SK-N-SH (cell line): ENCODE measurements at regions of chr10 and their contacts with region 1.

Region 1: DNA sequence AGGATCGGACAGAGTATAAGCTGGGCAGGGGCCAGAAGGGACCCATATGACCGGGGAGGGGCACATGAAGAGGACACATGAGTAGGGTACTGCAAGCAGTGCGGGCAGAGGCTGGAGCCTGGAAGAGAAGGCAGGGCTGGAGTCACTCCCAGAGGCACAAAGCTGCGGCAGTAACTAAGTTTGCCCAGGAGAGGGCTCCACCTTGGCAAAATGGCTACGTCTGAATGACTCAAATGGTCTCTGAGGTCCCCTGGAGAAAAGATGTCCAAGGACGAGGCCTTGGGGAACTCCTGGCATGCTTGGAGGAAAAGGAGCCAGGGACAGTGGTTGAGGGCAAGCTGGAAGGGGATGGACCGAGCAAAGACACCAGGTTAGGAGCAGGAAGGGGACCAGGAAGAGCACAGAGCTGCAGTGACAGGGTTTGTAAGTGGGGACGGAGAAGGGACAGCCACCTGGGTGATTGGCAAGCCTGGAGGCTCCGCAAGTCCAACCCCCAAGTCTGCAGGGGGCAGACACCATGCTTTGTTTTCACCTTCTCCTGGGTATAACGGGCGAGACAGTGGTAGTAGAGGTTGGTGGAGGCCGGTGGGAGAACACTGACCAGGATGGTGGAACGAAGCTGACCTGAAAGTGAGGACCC is 43.1 kb upstream of the LBX1 start:
- DNase-seq: peak; percentile 83
- H3K4me3 ChIP-seq: no peak overlapping the region
- H3K27ac ChIP-seq: no peak overlapping the region
- H3K4me1 ChIP-seq: no peaks in the 10 kb centered on the region; a peak in 1 of 4 replicates
- H3K27me3 ChIP-seq: peaks cover 8% of the 10 kb centered on the region; the same call in 1 of the 2 replicates
- CTCF ChIP-seq: peak; percentile 76
- EP300 ChIP-seq: no peak
- RAD21 ChIP-seq: peak; percentile 66

Region 2: GRCh38 chr10:101258179-101258885 is 14.0 kb before region 1 on chr10:
- CTCF ChIA-PET with region 1: interaction called, 11 read pairs
- POLR2A ChIA-PET with region 1: no interaction called
- DNase-seq: no peak
- H3K4me3 ChIP-seq: no peak overlapping the region; a peak in 1 of 4 replicates
- H3K27ac ChIP-seq: no peak overlapping the region
- H3K4me1 ChIP-seq: no peaks in the 10 kb centered on the region
- H3K27me3 ChIP-seq: peaks cover 5% of the 10 kb centered on the region; the same call in 1 of the 2 replicates
- CTCF ChIP-seq: no peak
- EP300 ChIP-seq: no peak
- RAD21 ChIP-seq: no peak

Region 3: GRCh38 chr10:101453791-101454718 is 181.7 kb after region 1 on chr10:
- CTCF ChIA-PET with region 1: interaction called, 12 read pairs
- POLR2A ChIA-PET with region 1: no interaction called
- DNase-seq: no peak
- H3K4me3 ChIP-seq: no peak overlapping the region
- H3K27ac ChIP-seq: peak overlapping the region in 1 of 2 experiments; percentile 12; a peak in 1 of 4 replicates
- H3K4me1 ChIP-seq: peaks cover 0 to 34% of the 10 kb centered on the region in 2 experiments; a peak in 2 of 4 replicates
- H3K27me3 ChIP-seq: no peaks in the 10 kb centered on the region
- CTCF ChIP-seq: no peak
- EP300 ChIP-seq: no peak
- RAD21 ChIP-seq: no peak